ENCODE measurements at regions of chr3 and their contacts with region 1.

Region 1: DNA sequence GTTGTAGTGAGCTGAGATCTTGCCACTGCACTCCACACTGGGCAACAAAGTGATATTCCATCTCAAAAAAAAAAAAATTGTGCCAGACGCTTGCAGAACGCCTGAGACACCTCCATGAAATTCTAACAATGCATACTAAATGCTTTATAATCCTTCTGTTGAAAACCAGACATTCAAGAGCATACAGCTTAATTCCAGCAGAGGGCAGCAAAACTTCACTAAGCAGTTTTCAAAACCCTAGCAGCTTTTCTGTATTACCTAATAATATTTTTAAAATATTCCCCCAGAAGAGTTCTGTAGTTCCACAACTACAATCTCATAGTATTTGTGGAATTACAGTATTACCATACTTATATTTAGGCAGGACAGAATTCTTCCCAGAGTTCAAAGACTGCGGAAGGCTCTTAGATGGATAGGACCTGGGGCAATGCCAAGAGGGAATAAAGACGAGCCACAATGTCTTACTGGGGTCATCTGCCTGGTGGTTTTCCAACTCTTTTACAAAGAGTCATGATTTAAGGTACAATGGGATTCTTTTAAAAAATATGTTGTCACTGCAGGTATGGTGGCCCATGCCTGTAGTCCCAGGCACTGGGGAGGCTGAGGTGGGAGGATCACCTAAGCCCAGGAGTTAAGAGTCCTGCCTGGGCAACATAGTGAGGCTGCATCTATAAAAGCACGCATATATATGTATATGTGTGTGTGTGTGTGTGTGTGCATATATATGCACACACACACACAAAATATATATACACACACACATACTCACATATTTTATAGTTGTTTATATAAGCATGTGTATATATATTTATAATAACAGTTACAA is 19.6 kb upstream of the TASOR start:
- DNase-seq: peak; percentile 65
- ATAC-seq: peak; percentile 58
- H3K4me3 Mint-ChIP-seq: no peak overlapping the region
- H3K27ac Mint-ChIP-seq: peak overlapping the region; percentile 39
- H3K4me1 Mint-ChIP-seq: peaks cover 23% of the 10 kb centered on the region
- H3K27me3 Mint-ChIP-seq: no peaks in the 10 kb centered on the region

Region 2: GRCh38 chr3:56725175-56725574 is 22.5 kb after region 1 on chr3:
- CTCF ChIA-PET with region 1: interaction called, 12 read pairs
- DNase-seq: peak; percentile 91
- ATAC-seq: peak; percentile 89
- H3K4me3 Mint-ChIP-seq: peak overlapping the region; percentile 62
- H3K27ac Mint-ChIP-seq: peak overlapping the region; percentile 95
- H3K4me1 Mint-ChIP-seq: peaks cover 58% of the 10 kb centered on the region
- H3K27me3 Mint-ChIP-seq: no peaks in the 10 kb centered on the region

Region 3: DNA sequence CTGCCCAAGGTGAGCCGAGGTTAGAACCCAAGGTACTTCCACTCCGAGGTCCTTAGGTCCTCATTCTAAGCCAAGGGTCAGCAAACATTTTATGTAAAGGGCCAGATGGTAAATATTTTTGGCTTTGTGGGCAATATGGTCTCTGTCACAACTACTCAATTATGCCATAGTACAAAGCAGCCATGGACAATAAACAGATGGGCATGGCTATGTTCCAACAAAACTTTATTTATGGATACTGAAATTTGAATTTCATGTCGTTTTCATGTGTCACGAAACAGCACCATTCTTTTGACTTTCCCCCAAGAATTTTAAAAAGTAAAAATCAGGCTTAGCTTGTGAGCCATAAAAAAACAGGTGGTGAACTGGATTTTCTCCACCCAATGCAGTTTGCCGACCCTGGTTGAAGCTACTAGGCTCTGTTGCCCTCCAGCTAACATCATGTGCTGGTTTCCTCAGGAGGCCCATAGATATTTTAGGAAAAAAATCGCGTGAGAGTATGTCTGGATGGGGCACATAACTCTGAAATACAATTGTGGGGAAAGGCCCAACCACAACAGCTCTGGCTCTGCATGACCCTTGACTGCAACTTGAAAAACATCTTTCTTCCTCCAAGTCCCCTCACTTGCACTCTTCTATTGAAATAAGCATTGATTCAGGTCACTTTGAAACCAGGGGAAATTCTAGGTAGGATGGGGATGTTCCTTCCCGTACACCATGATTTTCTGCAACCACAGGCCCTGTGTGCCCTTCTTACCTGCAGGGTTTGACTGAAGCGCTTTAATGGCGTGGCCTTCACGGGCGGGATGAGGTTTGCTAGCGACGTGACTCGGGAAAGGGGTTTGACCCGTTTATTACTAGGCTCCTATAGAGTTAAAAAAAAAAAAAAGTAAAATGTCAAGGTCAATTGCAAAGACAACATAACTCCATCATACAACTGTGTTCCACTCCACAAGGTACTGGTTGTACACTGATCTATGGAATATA is 70.5 kb after region 1 on chr3:
- CTCF ChIA-PET with region 1: no interaction called
- DNase-seq: no peak
- ATAC-seq: no peak
- H3K4me3 Mint-ChIP-seq: no peak overlapping the region
- H3K27ac Mint-ChIP-seq: no peak overlapping the region
- H3K4me1 Mint-ChIP-seq: peaks cover 58% of the 10 kb centered on the region
- H3K27me3 Mint-ChIP-seq: no peaks in the 10 kb centered on the region

Region 4: DNA sequence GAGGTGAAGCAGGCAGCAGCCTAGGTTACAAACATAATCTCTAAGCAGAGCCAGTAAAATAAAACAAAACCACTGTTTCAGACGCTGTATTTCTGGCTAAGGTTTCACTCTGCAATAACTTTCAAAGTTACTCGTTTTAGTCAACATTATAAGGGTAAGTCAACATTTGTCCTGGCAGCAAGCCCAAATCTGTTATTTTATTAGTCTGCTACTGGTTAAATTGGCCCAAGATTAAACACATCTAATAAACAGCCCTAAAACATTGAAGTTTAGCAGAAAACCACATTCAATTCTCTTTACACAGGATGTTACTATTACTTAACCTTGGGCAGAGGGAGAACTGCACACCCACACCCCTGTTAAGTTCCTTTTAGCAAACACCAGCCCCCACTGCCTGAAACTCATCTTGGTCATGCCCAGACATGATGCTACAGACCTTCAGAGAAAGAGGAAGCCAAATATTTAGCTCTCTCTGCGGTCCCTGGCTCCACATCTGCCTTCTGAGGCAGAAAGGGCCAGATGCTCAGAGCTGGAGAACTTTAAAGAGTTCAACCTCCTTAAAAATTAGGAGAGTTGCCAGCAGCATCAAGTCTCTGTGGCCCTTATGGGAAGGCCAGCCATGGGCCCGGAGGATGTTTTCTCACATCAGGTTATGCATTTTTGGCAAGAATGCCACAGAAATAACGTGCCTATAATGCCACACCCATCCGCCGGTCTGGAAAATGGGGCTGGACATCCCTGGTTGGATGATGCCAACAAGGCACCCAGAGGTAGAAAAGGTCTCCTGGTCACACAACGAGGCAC is 81.1 kb after region 1 on chr3:
- CTCF ChIA-PET with region 1: interaction called, 17 read pairs
- DNase-seq: peak; percentile 92
- ATAC-seq: peak; percentile 80
- H3K4me3 Mint-ChIP-seq: peak overlapping the region; percentile 58
- H3K27ac Mint-ChIP-seq: peak overlapping the region; percentile 92
- H3K4me1 Mint-ChIP-seq: peaks cover 96% of the 10 kb centered on the region
- H3K27me3 Mint-ChIP-seq: no peaks in the 10 kb centered on the region

Region 5: GRCh38 chr3:56915966-56916586 is 213.4 kb after region 1 on chr3:
- CTCF ChIA-PET with region 1: interaction called, 12 read pairs
- DNase-seq: peak; percentile 94
- ATAC-seq: peak; percentile 88
- H3K4me3 Mint-ChIP-seq: peak overlapping the region; percentile 96
- H3K27ac Mint-ChIP-seq: peak overlapping the region; percentile 100
- H3K4me1 Mint-ChIP-seq: peaks cover 68% of the 10 kb centered on the region
- H3K27me3 Mint-ChIP-seq: no peaks in the 10 kb centered on the region

Region 6: GRCh38 chr3:56980798-56981390 is 278.2 kb after region 1 on chr3:
- CTCF ChIA-PET with region 1: interaction called, 193 read pairs
- DNase-seq: peak; percentile 78
- ATAC-seq: peak; percentile 94
- H3K4me3 Mint-ChIP-seq: no peak overlapping the region
- H3K27ac Mint-ChIP-seq: peak overlapping the region; percentile 39
- H3K4me1 Mint-ChIP-seq: peaks cover 32% of the 10 kb centered on the region
- H3K27me3 Mint-ChIP-seq: no peaks in the 10 kb centered on the region

Region 7: DNA sequence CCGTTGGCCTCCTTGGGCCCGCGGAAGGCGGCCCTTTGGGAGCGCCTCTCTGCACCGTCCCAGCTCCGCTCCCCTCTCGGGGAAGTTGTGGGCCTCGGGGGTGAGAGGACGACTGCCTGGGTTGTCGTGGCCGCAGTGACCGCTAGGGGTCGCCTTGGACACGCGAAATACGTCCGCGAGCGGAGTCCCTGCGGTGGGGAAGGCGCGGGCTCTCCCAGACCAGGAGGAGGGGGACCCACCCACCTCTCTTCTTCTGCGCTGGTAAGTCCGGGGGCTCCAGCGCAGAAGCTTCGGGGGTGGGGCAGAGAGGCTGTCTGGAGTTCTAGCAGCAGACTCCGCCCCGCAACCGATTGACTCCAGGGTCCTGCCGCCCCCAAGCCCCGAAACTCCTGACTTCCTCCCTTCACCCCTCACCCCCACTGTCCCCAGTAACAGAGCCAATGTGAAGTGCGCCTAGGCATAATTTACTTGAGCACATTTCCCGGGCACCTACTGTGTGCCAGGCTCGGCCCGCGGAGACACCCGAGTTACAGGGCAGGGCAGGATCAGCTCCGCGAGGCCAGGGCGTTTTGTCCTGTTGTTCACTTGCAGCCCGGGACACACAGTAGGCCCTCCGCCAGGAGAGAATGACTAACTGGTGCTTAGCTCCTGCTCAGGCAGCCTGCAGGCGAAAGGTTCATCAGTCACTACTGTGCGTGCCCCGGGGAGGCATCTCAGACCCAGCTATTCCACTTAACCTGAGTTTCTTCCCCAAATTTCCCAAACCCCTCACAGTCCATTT is 1475.2 kb after region 1 on chr3:
- CTCF ChIA-PET with region 1: no interaction called
- DNase-seq: peak; percentile 91
- ATAC-seq: peak; percentile 94
- H3K4me3 Mint-ChIP-seq: peak overlapping the region; percentile 62
- H3K27ac Mint-ChIP-seq: no peak overlapping the region
- H3K4me1 Mint-ChIP-seq: peaks cover 21% of the 10 kb centered on the region
- H3K27me3 Mint-ChIP-seq: peaks cover 6% of the 10 kb centered on the region